Colonic mucosa (tissue), 4 donors: ENCODE measurements at regions of chr11 and their contacts with region 1.

Region 1: GRCh38 chr11:9160166-9160565 is 68.8 kb upstream of the SCUBE2 start:
- DNase-seq: no peak
- H3K4me3 ChIP-seq: no peak overlapping the region
- H3K27ac ChIP-seq: no peak overlapping the region
- H3K4me1 ChIP-seq: no peaks in the 10 kb centered on the region
- H3K27me3 ChIP-seq: no peaks in the 10 kb centered on the region
- CTCF ChIP-seq: no peak

Region 2: GRCh38 chr11:8777907-8778767 is 382.0 kb before region 1 on chr11:
- intact Hi-C with region 1: no loop called
- DNase-seq: no peak
- H3K4me3 ChIP-seq: no peak overlapping the region
- H3K27ac ChIP-seq: peak overlapping the region; percentile 26
- H3K4me1 ChIP-seq: no peaks in the 10 kb centered on the region
- H3K27me3 ChIP-seq: no peaks in the 10 kb centered on the region
- CTCF ChIP-seq: no peak

Region 3: GRCh38 chr11:9210922-9211320 is 50.8 kb after region 1 on chr11:
- intact Hi-C with region 1: no loop called
- DNase-seq: no peak
- H3K4me3 ChIP-seq: no peak overlapping the region
- H3K27ac ChIP-seq: no peak overlapping the region
- H3K4me1 ChIP-seq: no peaks in the 10 kb centered on the region
- H3K27me3 ChIP-seq: no peaks in the 10 kb centered on the region
- CTCF ChIP-seq: no peak

Region 4: DNA sequence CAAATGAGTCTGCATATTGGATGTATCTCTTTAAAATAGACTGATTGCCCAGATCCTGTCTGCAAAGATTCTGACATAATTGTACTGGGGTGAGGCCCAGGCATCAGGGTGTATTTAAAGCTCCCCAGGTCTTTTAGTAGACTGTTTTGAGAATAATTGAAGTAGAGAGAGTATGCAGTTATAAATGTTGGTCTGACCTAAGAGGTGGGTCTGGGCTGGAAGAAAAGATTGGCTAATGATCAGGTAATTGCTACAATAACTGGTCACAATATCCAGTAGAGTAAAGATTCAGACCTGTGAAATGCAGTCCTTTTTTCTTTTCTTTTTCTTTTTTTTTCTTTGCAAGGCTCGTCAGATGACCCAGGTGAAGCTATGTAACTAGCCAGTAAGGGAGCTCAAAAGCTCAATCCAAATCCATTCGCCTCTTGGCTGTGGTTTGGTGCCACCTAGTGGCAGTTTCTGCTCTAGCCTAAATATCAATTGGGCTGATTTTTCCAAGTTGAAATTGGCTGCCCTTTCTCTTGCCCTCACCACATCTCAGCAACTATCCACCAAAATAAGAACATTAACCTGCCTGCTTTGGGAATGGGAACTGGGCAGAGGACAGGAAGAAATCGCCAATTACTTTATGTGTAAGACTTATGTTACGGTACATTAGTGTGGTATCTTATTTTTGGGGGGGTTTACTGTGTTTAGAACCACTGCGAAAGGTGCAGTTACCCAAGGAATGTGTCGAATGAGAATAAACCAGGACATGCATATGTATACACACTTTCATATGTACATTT is 346.5 kb after region 1 on chr11:
- intact Hi-C with region 1: loop called (anchors 5 kb)
- DNase-seq: peak; percentile 81
- H3K4me3 ChIP-seq: no peak overlapping the region
- H3K27ac ChIP-seq: no peak overlapping the region
- H3K4me1 ChIP-seq: no peaks in the 10 kb centered on the region
- H3K27me3 ChIP-seq: no peaks in the 10 kb centered on the region
- CTCF ChIP-seq: peak; percentile 88